Tibial artery (tissue), 4 donors: ENCODE measurements at regions of chr12 and their contacts with region 1.

Region 1: DNA sequence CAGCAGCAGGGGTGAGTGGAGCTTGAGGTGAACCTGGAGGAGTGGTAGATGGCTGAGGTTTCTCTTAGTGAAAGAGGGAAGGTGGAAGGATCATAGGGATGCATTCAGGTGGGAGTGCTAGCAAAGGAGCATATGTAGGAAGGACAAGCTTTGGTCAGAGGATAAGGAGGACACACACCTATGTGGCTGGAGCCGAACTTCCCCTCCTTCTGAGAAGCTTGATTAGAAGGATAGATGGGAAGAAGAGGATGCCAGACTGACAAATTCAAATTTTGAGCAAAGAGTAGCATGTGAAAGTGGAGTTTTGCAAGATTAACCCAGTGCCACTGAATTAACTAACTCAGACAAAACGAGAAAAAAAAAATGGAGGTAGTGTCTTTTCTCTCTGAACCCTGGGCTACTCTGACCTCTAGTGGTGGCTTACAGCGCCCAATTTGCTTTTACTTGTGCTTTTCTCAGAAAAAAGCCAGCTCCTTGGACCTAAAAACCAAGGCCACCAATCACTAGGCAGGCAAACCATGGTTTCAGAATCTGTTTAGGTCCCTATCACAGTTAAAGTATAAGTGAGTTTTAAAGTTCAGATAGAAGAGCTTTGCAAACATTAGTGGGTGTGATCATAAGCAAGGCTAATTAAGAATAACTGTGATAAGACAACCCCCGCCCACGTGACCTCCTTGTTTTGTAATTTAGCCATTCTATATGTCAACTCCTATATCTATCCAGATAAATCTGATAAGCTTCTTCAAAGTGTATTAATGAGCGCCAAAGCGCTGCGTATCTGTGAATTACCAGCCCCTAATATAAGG is 15.5 kb downstream of the EMP1 start:
- DNase-seq: peak in 1 of 2 donors; percentile 43
- H3K4me3 ChIP-seq: no peak overlapping the region
- H3K27ac ChIP-seq: no peak overlapping the region
- H3K4me1 ChIP-seq: peaks cover 0 to 14% (median 13%) of the 10 kb centered on the region in 4 donors
- H3K27me3 ChIP-seq: no peaks in the 10 kb centered on the region
- CTCF ChIP-seq: peak; percentile 77 to 78

Region 2: DNA sequence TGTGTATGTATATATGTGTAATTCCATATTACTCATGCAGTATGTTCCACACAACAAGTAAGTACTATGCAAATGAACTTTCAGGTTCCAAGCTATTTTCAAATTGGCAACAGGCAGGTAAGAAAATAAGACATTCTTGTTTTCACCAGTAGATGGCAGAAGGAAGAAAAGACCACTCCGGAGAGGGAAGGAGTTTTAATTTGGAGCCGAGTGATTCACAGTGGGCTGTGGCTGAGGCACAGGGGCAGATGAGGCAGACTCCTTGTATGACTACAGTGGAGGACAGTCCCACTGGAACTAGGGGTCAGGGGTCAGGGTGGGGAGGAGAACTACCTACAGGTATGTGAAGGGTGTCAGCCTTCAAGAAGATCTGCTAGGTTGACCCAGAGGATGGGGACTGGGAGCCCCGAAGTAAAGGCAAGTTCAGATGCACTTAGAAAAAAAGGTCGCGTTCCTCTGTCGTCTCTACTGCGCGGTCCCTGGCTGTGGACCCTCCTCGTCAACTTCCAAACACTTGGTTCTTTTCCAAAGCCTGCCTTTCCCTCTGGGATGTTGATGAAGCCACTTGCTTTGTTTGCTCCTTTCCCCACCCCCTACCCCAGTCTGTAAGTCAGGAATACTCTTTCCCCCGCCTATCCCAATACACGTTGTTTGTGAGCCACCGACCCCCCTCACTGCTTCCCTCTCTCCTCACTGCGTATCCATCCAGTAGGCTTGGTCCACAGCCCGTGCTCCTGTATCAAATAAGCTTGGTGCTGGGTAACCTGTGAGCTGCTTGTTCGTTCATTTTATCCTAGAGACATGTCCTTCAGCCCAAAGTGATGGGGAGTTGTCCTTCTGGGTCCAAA is 374.8 kb before region 1 on chr12:
- intact Hi-C with region 1: loop called (anchors 10 kb)
- DNase-seq: peak in 1 of 2 donors; percentile 72
- H3K4me3 ChIP-seq: no peak overlapping the region
- H3K27ac ChIP-seq: no peak overlapping the region
- H3K4me1 ChIP-seq: peaks cover 0 to 10% (median 0%) of the 10 kb centered on the region in 4 donors
- H3K27me3 ChIP-seq: no peaks in the 10 kb centered on the region
- CTCF ChIP-seq: peak; percentile 54 to 71

Region 3: DNA sequence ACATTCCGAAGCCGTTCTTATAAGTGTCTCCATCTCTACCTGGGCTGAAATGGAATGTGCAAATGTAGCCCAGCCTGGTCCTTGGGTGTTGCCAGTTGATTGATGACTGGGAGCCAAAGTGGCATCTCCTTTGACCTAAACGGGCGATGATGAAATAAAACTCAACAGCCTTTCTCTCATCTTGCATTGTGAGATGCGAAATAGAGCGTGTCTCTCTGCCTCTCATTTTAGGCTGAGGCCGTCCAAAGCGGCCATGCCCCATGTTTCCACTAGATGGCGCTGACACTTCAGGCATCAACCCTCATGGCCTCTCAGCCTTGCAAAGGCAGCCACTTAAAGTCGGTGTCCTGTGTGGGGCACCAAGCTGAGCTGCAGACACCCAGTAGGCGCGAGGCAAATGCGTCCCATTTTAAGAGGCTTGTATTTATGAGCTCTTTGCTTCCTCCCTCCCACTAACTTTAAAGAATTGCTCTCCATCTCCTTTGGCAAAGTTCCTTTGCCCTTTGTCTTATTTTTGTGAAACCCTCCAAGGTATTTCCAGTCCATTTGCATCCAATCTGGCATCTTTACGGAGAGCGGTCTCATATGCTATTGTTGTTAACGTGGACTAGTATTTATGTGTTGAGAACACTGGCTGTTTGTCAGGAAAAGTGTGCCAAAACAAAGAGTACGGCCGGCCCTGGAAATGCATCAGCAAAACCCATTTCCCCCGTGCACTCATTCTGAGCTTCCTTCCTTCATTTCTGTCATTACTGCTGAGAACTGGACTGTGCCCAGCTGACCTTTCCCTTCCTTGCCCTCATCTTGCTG is 295.7 kb before region 1 on chr12:
- intact Hi-C with region 1: loop called (anchors 5 kb)
- DNase-seq: peak; percentile 91 to 92
- H3K4me3 ChIP-seq: peak overlapping the region in 1 of 2 donors; percentile 10
- H3K27ac ChIP-seq: peak overlapping the region; percentile 44 to 57
- H3K4me1 ChIP-seq: peaks cover 0 to 13% (median 7%) of the 10 kb centered on the region in 4 donors
- H3K27me3 ChIP-seq: no peaks in the 10 kb centered on the region
- CTCF ChIP-seq: peak; percentile 95 to 98

Region 4: GRCh38 chr12:13023811-13024530 is 188.1 kb before region 1 on chr12:
- intact Hi-C with region 1: loop called (anchors 5 kb)
- DNase-seq: peak in 1 of 2 donors; percentile 66
- H3K4me3 ChIP-seq: no peak overlapping the region
- H3K27ac ChIP-seq: no peak overlapping the region
- H3K4me1 ChIP-seq: peaks cover 0 to 7% (median 0%) of the 10 kb centered on the region in 4 donors
- H3K27me3 ChIP-seq: no peaks in the 10 kb centered on the region
- CTCF ChIP-seq: peak; percentile 39 to 41

Region 5: DNA sequence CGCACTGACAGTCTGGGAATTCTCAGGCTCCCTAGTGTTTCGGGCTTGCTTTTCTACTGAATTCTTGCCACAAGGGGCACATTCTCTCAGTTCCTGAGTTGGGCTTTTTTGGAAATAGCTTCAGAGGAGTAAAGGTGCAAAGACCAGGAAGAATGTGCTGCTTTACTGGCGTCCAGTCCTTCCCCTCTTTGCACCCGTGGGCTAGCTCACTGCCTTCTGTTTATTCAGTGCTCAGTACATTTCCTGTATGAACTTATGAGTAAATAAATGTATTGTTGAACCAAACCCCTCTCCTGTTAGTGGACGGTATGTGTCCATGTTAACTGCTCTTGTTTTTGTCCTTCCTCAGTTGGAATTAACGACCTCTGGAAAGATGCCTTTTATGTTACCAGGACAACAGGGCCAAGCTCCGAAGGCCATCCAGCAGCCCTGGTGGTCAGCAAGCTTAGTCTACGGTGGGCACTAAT is 132.6 kb before region 1 on chr12:
- intact Hi-C with region 1: no loop called
- DNase-seq: no peak
- H3K4me3 ChIP-seq: no peak overlapping the region
- H3K27ac ChIP-seq: no peak overlapping the region
- H3K4me1 ChIP-seq: no peaks in the 10 kb centered on the region
- H3K27me3 ChIP-seq: no peaks in the 10 kb centered on the region
- CTCF ChIP-seq: no peak

Region 6: GRCh38 chr12:13100882-13101769 is 110.9 kb before region 1 on chr12:
- intact Hi-C with region 1: loop called (anchors 5 kb)
- DNase-seq: peak; percentile 94 to 95
- H3K4me3 ChIP-seq: peak overlapping the region; percentile 60 to 63
- H3K27ac ChIP-seq: peak overlapping the region; percentile 92 to 98
- H3K4me1 ChIP-seq: peaks cover 0 to 55% (median 21%) of the 10 kb centered on the region in 4 donors
- H3K27me3 ChIP-seq: no peaks in the 10 kb centered on the region
- CTCF ChIP-seq: no peak

Region 7: DNA sequence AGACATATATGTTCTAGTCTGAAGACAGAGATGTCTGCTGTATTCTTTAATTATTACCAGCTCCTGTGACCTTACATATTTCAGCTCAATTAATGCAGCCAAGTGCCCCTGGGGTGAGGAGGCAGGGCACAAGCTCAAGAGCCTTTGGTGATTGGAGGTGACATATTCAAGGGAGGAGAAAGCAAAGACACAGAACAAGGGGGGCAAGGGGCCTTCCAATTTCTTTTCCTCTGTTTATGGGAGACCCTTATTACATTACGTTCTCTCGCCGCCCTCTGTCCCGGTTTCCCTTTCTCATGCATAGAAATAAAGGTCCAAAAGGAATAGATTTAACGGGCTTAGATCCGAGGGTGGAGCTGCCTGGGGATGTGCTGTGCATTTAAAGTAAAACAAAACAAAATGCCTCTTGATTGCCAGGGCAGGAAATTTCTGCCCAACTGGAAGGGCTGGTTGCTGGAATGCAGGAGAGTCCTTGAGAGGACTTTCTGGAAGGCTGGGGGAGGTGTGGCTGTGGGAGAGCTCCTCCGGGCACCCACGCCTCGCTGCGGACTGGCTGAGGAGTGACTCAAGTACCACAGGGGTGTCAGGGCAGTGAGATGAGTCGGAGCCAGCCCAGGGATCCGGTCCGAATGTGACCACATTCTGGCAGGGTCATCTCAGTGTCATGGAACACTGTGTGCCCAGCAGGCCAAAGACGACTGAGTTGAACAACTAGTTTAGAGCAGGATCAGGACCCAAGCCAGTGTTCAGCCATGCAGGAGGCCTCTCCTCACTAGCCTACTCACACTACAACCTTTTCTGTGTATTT is 76.5 kb before region 1 on chr12:
- intact Hi-C with region 1: no loop called
- DNase-seq: peak; percentile 80 to 88
- H3K4me3 ChIP-seq: no peak overlapping the region
- H3K27ac ChIP-seq: peak overlapping the region; percentile 49 to 54
- H3K4me1 ChIP-seq: peaks cover 0 to 10% (median 1%) of the 10 kb centered on the region in 4 donors
- H3K27me3 ChIP-seq: no peaks in the 10 kb centered on the region
- CTCF ChIP-seq: no peak